Lower leg skin (tissue), 4 donors: ENCODE measurements at regions of chr9 and their contacts with region 1.

Region 1: DNA sequence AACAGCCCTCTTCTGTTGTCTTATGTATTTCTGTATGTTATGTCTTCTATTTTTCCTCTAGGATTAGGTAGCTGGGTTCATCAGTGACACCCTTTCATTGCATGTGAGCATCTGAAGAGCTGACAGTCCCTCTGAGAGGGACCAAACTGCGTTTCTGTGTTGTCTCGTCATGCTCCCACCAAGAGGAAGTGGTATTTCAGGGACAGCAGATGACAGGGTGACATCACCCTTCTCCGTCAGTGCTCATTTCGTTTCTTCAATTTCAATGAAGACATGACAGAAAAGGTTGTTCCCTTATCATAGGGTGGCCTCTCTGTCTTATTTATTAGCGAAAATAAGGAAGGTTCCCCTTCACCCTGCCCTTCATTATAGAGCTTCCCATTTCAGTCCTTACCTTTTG is 225.9 kb upstream of the NR4A3 start:
- DNase-seq: no peak
- H3K4me3 ChIP-seq: no peak overlapping the region
- CTCF ChIP-seq: no peak
- POLR2A ChIP-seq: no peak

Region 2: GRCh38 chr9:99690573-99690972 is 94.8 kb after region 1 on chr9:
- intact Hi-C with region 1: loop called (anchors 5 kb)
- DNase-seq: no peak
- H3K4me3 ChIP-seq: no peak overlapping the region
- CTCF ChIP-seq: no peak
- POLR2A ChIP-seq: no peak

Region 3: GRCh38 chr9:101219030-101219429 is 1623.2 kb after region 1 on chr9:
- intact Hi-C with region 1: loop called (anchors 5 kb)
- DNase-seq: no peak
- H3K4me3 ChIP-seq: no peak overlapping the region
- CTCF ChIP-seq: no peak
- POLR2A ChIP-seq: no peak